Activated naive CD4-positive, alpha-beta T cell treated with anti-CD3 and anti-CD28 coated beads for 36 hours (primary cell): ENCODE measurements at regions of chr5 and their contacts with region 1.

Region 1: DNA sequence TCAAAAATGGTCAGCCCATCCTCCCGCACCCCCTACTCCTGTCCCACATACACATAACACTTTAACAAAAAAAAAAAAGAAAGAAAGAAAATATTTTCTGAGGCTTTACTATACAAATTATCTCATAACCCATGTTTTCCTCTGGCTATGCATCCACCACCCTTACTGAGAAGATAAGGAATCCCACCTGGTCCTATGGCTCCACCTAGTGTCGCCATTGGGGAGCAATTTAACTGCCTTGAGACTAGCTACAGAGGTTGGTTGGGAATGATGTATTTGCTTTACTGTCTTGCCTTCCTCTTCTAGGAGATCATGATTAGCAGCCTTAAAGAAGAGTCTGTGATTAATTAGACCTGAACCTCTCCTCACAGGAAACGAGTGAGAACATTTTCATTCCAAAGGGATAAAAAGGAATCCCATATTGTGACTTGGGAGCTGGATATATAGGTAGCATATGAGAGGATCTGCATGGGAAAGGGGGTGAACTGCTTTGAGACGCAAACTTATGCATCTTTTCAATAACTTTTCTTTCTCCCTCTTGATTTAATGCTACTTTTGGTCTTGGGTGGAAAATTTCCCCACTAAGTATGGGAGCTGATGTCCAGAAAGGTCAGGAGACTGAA is 77.7 kb upstream of the SELENOP start:
- DNase-seq: peak; percentile 86
- H3K4me3 Mint-ChIP-seq: no peak overlapping the region
- H3K27ac Mint-ChIP-seq: no peak overlapping the region
- H3K4me1 Mint-ChIP-seq: no peaks in the 10 kb centered on the region
- H3K27me3 Mint-ChIP-seq: peaks cover 2% of the 10 kb centered on the region

Region 2: DNA sequence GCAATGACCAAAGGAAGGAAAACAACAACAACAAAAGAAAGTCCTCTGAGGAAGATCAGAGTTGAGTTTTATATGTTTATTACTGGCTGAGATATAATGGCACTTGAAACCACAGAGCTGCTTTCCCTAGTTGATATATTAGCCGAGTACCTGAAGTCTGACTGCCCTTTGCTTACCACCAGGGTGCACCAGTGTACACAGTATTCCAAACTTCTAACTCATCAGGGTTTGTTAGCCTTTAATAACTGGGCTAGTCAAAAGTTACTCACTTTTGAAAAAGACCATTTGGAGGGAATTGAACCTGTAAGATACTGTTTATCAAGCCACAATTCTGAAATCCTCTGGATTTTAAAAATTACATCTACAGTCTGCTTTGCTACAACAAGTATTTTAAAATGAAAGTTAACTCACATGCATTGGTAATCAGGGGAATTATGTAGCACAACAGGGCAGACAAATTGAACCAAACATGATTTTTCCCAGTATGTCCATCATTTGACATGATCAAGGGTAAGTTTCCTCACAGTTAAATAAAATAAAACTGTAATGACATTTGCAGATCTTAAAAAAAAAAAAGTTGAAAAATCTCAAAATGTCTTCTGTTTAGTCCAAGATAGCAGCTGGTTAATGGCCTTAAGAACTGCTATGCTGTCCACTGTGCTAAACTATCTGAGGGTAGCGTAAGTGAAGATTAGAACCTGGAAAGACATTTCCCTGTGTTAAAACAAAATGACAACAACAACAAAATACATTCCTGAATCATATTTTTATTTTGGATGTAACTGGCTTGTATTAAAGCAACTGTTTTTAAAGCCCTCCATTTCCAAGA is 1618.8 kb before region 1 on chr5:
- CTCF ChIA-PET with region 1: no interaction called
- intact Hi-C with region 1: loop called (anchors 2 kb)
- DNase-seq: peak; percentile 12
- H3K4me3 Mint-ChIP-seq: no peak overlapping the region
- H3K27ac Mint-ChIP-seq: no peak overlapping the region
- H3K4me1 Mint-ChIP-seq: no peaks in the 10 kb centered on the region
- H3K27me3 Mint-ChIP-seq: no peaks in the 10 kb centered on the region

Region 3: GRCh38 chr5:42057254-42057690 is 832.1 kb before region 1 on chr5:
- CTCF ChIA-PET with region 1: no interaction called
- intact Hi-C with region 1: loop called (anchors 5 kb)
- DNase-seq: peak; percentile 69
- H3K4me3 Mint-ChIP-seq: no peak overlapping the region
- H3K27ac Mint-ChIP-seq: no peak overlapping the region
- H3K4me1 Mint-ChIP-seq: no peaks in the 10 kb centered on the region
- H3K27me3 Mint-ChIP-seq: no peaks in the 10 kb centered on the region

Region 4: DNA sequence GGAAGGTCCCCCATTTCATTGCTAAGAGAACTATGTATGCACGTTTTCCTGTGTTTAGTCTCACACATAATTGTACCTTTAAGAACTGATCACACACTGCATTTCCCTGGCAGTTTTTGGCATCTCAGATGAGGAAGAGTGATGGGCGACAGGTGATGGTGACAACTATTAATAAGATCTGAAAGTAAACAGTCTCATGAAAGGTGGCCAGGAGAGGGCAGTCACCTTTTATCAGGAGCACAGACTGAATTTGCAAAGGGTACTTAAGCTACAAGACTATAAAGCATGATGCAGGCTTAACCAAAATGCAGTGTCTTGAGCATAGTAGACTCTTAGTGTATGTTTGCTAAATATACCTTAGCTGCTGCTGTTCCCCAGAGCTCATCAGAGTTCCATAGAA is 374.7 kb before region 1 on chr5:
- CTCF ChIA-PET with region 1: interaction called, 7 read pairs
- intact Hi-C with region 1: loop called (anchors 1 kb)
- DNase-seq: no peak
- H3K4me3 Mint-ChIP-seq: no peak overlapping the region
- H3K27ac Mint-ChIP-seq: no peak overlapping the region
- H3K4me1 Mint-ChIP-seq: no peaks in the 10 kb centered on the region
- H3K27me3 Mint-ChIP-seq: no peaks in the 10 kb centered on the region

Region 5: GRCh38 chr5:42745426-42745825 is 144.0 kb before region 1 on chr5:
- CTCF ChIA-PET with region 1: no interaction called
- intact Hi-C with region 1: loop called (anchors 1 kb)
- DNase-seq: peak; percentile 18
- H3K4me3 Mint-ChIP-seq: no peak overlapping the region
- H3K27ac Mint-ChIP-seq: no peak overlapping the region
- H3K4me1 Mint-ChIP-seq: no peaks in the 10 kb centered on the region
- H3K27me3 Mint-ChIP-seq: no peaks in the 10 kb centered on the region

Region 6: GRCh38 chr5:42879291-42879690 is 10.1 kb before region 1 on chr5:
- CTCF ChIA-PET with region 1: interaction called, 18 read pairs
- intact Hi-C with region 1: no loop called
- DNase-seq: no peak
- H3K4me3 Mint-ChIP-seq: no peak overlapping the region
- H3K27ac Mint-ChIP-seq: no peak overlapping the region
- H3K4me1 Mint-ChIP-seq: peaks cover 6% of the 10 kb centered on the region
- H3K27me3 Mint-ChIP-seq: no peaks in the 10 kb centered on the region

Region 7: DNA sequence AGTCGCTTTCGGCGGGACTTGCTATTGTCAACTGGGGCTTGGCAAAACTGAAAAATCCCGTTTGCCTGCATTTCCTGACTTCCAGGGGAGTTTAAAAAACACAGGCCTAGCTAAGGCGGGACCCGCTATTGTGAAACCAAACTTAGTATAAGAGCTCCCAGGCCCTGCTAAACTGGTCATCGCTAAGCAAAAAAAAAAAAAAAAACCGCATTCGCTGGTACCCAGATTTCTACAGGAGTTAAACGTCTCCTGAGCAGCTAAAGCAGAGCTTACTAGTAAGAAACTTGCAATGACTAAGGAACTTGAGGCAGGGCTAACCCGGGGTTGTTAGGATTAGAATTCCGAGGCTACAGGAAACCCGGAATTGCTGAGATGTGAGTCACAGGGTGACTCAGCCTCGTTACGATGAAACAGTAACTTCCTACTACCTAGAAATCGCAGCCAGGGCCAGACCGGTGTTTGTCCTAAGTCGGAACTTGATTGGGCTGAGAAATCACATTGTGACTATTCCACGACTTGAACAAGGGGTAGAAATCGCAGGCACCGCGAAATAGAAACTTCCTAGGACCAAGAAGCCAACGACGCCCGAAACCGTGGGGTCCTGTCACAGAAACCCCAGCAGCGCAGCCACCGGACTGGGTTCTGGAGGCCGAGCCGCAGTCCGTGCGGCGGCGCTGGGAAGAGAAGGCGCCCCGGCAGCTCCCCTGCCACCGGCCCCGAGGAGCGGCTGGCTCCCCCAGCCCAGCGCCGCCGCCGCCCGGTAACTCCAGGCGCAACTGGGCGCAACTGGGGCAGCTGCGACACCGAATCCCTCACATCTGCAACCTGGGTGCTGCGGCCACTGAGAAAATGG is 61.2 kb after region 1 on chr5:
- CTCF ChIA-PET with region 1: interaction called, 10 read pairs
- intact Hi-C with region 1: no loop called
- DNase-seq: peak; percentile 83
- H3K4me3 Mint-ChIP-seq: peak overlapping the region; percentile 87
- H3K27ac Mint-ChIP-seq: peak overlapping the region; percentile 88
- H3K4me1 Mint-ChIP-seq: peaks cover 9% of the 10 kb centered on the region
- H3K27me3 Mint-ChIP-seq: no peaks in the 10 kb centered on the region

Region 8: DNA sequence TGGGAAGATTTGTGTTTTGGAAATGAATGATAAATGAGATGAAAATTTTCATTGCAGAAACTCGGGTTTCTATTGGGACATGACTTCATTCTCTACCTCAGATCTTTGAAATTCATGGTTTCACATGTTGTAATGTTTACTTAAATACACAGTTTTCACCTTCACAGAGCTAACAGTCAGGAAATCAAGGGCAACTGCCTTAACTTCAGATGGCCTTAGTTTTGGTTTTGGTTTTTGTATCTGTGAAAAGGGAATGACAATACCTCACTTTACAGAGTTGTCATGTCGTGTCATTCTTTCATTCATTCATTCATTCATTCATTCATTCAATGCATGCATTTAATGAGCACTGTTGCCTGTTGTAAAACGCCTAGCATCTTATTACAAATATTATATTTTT is 344.5 kb after region 1 on chr5:
- CTCF ChIA-PET with region 1: no interaction called
- intact Hi-C with region 1: no loop called
- DNase-seq: no peak
- H3K4me3 Mint-ChIP-seq: no peak overlapping the region
- H3K27ac Mint-ChIP-seq: no peak overlapping the region
- H3K4me1 Mint-ChIP-seq: peaks cover 5% of the 10 kb centered on the region
- H3K27me3 Mint-ChIP-seq: no peaks in the 10 kb centered on the region

Region 9: GRCh38 chr5:43367909-43368648 is 478.7 kb after region 1 on chr5:
- CTCF ChIA-PET with region 1: no interaction called
- intact Hi-C with region 1: no loop called
- DNase-seq: no peak
- H3K4me3 Mint-ChIP-seq: no peak overlapping the region
- H3K27ac Mint-ChIP-seq: no peak overlapping the region
- H3K4me1 Mint-ChIP-seq: no peaks in the 10 kb centered on the region
- H3K27me3 Mint-ChIP-seq: no peaks in the 10 kb centered on the region